GM12878 (cell line): ENCODE measurements at regions of chr2 and their contacts with region 1.

Region 1: GRCh38 chr2:225002039-225002655 is 40.1 kb downstream of the DOCK10 start:
- DNase-seq: peak; percentile 60
- ATAC-seq: peak; percentile 85
- H3K4me3 ChIP-seq: no peak overlapping the region
- H3K27ac ChIP-seq: no peak overlapping the region
- H3K4me1 ChIP-seq: peaks cover 13% of the 10 kb centered on the region; the same call in 1 of the 2 replicates
- H3K27me3 ChIP-seq: no peaks in the 10 kb centered on the region
- CTCF ChIP-seq: peak; percentile 76 to 83 (median 77)
- EP300 ChIP-seq: no peak
- POLR2A ChIP-seq: no peak
- RAD21 ChIP-seq: peak; percentile 95

Region 2: GRCh38 chr2:224357098-224357901 is 644.8 kb before region 1 on chr2:
- CTCF ChIA-PET with region 1: no interaction called
- POLR2A ChIA-PET with region 1: no interaction called
- RAD21 ChIA-PET with region 1: no interaction called
- SMC1A ChIA-PET with region 1: no interaction called
- in situ Hi-C with region 1: loop called (anchors 25 kb)
- intact Hi-C with region 1: loop called (anchors 5 kb)
- DNase-seq: peak; percentile 11
- ATAC-seq: peak; percentile 93
- H3K4me3 ChIP-seq: no peak overlapping the region
- H3K27ac ChIP-seq: no peak overlapping the region
- H3K4me1 ChIP-seq: no peaks in the 10 kb centered on the region
- H3K27me3 ChIP-seq: no peaks in the 10 kb centered on the region; a peak in 2 of 4 replicates
- CTCF ChIP-seq: peak; percentile 63 to 88 (median 68); a peak in 5 of 6 replicates
- EP300 ChIP-seq: no peak
- POLR2A ChIP-seq: no peak
- RAD21 ChIP-seq: peak; percentile 90

Region 3: GRCh38 chr2:224885836-224886547 is 116.2 kb before region 1 on chr2:
- CTCF ChIA-PET with region 1: interaction called, 30 read pairs
- POLR2A ChIA-PET with region 1: no interaction called
- RAD21 ChIA-PET with region 1: interaction called, 7 read pairs
- SMC1A ChIA-PET with region 1: interaction called, 24 read pairs
- in situ Hi-C with region 1: no loop called
- intact Hi-C with region 1: loop called (anchors 2 kb)
- DNase-seq: peak; percentile 37
- ATAC-seq: peak; percentile 94
- H3K4me3 ChIP-seq: no peak overlapping the region
- H3K27ac ChIP-seq: peak overlapping the region; percentile 59
- H3K4me1 ChIP-seq: peaks cover 6% of the 10 kb centered on the region; the same call in 1 of the 2 replicates
- H3K27me3 ChIP-seq: no peaks in the 10 kb centered on the region
- CTCF ChIP-seq: no peak
- EP300 ChIP-seq: 0 out of 4 replicates have a peak, but pooled peaks of 1 of the 2 experiments have one; percentile 27
- POLR2A ChIP-seq: no peak
- RAD21 ChIP-seq: peak; percentile 30

Region 4: DNA sequence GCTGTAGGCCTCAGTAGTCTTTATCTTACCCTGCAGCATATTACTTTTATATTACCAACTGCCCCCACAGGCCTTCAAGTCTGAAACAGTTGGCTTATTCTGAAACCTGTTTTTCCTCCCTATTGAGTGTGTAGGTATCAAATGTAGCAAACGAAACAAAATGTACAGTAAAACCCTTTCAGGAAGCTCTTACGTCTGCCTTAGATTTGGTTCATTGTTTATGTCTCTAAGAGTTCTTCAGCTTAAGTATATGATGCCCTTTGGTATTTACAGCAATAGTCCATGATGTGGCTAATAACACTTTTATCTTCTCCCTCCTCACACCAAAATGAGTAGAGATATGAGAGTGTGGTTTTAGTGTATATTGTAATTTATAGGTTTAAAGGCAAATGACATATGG is 68.7 kb before region 1 on chr2:
- CTCF ChIA-PET with region 1: interaction called, 118 read pairs
- POLR2A ChIA-PET with region 1: interaction called, 3 read pairs
- RAD21 ChIA-PET with region 1: interaction called, 13 read pairs
- SMC1A ChIA-PET with region 1: interaction called, 27 read pairs
- in situ Hi-C with region 1: loop called (anchors 5 kb)
- intact Hi-C with region 1: loop called (anchors 1 kb)
- DNase-seq: no peak
- ATAC-seq: peak; percentile 35
- H3K4me3 ChIP-seq: no peak overlapping the region
- H3K27ac ChIP-seq: no peak overlapping the region
- H3K4me1 ChIP-seq: peaks cover 29% of the 10 kb centered on the region
- H3K27me3 ChIP-seq: no peaks in the 10 kb centered on the region
- CTCF ChIP-seq: no peak
- EP300 ChIP-seq: no peak
- POLR2A ChIP-seq: no peak
- RAD21 ChIP-seq: no peak

Region 5: DNA sequence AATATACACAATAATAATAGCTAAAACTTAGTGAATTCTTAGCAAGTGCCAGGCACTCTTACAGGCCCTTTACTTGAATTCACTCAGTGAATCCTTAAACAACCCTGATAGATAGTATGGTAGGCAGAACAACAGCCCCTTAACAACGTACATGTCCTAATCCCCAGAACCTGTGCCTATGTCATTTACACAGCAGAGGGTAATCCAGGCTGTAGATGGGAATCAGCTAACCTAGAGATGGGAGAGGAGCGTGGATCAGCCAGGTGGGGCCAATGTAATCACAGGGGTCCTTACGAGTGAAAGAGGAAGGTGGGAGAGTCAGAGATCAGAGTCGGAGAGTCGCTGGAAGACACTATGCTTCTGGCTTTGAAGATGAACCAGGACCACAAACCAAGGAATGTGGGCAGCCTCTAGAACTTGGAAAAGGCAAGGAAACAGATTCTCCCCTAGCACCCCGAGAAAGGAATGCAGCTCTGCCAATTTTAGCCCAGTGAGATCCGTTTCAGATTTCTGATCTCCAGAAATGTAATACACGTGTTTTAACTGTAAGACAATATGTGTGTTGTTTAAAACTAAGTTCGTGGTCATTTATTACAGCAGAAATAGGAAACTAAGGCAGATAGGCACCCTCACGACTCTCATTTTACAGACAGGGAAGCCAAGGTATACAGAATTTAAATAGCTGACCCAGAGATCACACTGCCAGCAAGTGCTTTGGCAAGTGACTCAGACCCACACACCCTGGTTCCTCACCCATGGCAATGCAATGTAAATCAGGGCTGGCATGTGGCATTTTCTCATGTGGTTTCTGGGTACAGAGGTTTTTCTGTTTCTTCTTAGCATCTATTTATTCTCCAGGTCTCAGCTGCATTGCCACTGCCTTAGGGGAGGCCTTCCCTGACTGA is 28.8 kb before region 1 on chr2:
- CTCF ChIA-PET with region 1: interaction called, 16 read pairs
- POLR2A ChIA-PET with region 1: no interaction called
- RAD21 ChIA-PET with region 1: no interaction called
- SMC1A ChIA-PET with region 1: interaction called, 4 read pairs
- in situ Hi-C with region 1: no loop called
- intact Hi-C with region 1: no loop called
- DNase-seq: no peak
- ATAC-seq: peak; percentile 59
- H3K4me3 ChIP-seq: no peak overlapping the region
- H3K27ac ChIP-seq: no peak overlapping the region
- H3K4me1 ChIP-seq: peaks cover 32% of the 10 kb centered on the region
- H3K27me3 ChIP-seq: no peaks in the 10 kb centered on the region
- CTCF ChIP-seq: no peak
- EP300 ChIP-seq: no peak
- POLR2A ChIP-seq: no peak
- RAD21 ChIP-seq: no peak

Region 6: DNA sequence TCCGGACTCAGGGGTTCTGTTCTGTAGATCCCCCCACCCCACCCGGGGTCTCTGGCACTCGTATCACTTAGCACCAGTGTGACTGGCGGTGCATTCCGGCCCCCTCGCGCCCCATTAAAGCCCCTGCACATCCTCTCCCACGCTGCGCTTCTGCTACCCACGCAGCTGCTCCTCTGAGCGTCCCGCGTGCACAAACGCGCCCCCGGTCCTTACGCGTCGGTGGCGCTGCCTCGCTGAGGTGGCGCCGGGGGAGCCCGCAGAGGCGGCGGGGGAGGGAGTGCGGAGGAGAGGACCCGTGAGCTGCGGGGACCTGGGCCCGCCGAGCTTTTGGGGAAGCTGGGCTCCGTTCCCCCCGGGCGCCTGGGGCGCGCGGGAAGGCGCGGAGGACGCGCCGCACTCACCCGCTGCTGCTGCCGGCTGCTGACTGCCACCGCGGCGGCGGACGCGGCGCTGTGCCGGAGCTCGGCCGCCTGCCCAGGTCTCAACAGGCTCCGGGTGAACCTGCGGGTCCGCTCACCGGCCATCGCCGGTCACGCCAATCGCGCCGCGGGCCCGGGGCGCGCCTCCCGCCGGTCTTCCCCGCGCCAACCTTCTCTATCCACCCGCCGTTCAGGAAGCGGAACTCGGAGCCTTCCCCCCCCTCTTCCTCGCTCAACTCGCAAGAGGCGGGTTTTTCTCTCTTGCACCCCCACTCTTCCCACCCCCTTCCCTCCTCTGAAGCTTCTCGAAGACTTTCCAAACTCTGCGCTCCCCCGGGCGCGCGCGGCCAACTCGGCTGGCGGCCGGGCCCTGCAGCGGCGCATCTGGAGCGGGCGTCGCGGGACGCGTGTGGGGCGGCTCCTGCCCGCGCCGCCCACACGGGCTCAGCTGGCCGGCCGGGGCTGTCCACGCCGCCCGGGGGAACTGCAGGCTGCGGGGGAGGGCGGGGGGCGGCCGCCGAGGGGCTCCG is 40.0 kb after region 1 on chr2 and contains the start of gene DOCK10:
- CTCF ChIA-PET with region 1: interaction called, 15 read pairs
- POLR2A ChIA-PET with region 1: interaction called, 8 read pairs
- RAD21 ChIA-PET with region 1: interaction called, 47 read pairs
- SMC1A ChIA-PET with region 1: interaction called, 45 read pairs
- in situ Hi-C with region 1: no loop called
- intact Hi-C with region 1: no loop called
- DNase-seq: no peak
- ATAC-seq: peak; percentile 36
- H3K4me3 ChIP-seq: peak within 1 kb of the TSS; percentile 92
- H3K27ac ChIP-seq: peak within 1 kb of the TSS; percentile 98
- H3K4me1 ChIP-seq: peaks cover 13% of the 10 kb centered on the region
- H3K27me3 ChIP-seq: no peaks in the 10 kb centered on the region
- CTCF ChIP-seq: no peak
- EP300 ChIP-seq: no peak
- POLR2A ChIP-seq: peak; percentile 65
- RAD21 ChIP-seq: no peak
- polyA plus RNA-seq, gene DOCK10: 16.9 to 17.8 TPM

Region 7: GRCh38 chr2:225290757-225291400 is 288.7 kb after region 1 on chr2:
- CTCF ChIA-PET with region 1: no interaction called
- POLR2A ChIA-PET with region 1: no interaction called
- RAD21 ChIA-PET with region 1: no interaction called
- SMC1A ChIA-PET with region 1: no interaction called
- in situ Hi-C with region 1: no loop called
- intact Hi-C with region 1: no loop called
- DNase-seq: no peak
- ATAC-seq: no peak
- H3K4me3 ChIP-seq: no peak overlapping the region
- H3K27ac ChIP-seq: no peak overlapping the region
- H3K4me1 ChIP-seq: no peaks in the 10 kb centered on the region
- H3K27me3 ChIP-seq: no peaks in the 10 kb centered on the region
- CTCF ChIP-seq: no peak
- EP300 ChIP-seq: no peak
- POLR2A ChIP-seq: no peak
- RAD21 ChIP-seq: no peak

Region 8: DNA sequence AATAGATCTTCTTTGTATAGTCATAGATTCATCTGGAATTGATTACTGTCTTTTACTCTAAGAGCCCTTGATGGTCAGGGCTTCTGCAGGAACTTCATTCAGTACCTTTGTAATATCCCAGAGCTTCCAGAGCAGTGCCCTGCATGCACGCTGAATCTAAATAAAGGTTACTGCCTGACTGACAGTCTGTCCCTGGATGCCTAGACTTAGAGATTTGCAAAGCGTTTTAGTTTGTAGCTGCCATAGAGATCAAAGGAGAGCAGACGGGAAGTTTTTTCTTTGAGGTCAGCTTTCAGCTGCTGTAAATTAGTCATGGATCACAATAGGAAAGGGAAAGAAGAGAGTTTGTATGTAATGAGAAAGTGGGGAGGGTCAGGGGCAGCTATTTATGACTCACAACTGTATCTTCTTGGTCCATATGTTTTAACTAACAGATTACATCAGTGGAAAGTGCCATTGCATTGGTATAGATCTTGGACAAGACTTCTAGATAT is 352.2 kb after region 1 on chr2:
- CTCF ChIA-PET with region 1: no interaction called
- POLR2A ChIA-PET with region 1: no interaction called
- RAD21 ChIA-PET with region 1: no interaction called
- SMC1A ChIA-PET with region 1: no interaction called
- in situ Hi-C with region 1: no loop called
- intact Hi-C with region 1: no loop called
- DNase-seq: no peak
- ATAC-seq: no peak
- H3K4me3 ChIP-seq: no peak overlapping the region
- H3K27ac ChIP-seq: no peak overlapping the region
- H3K4me1 ChIP-seq: no peaks in the 10 kb centered on the region
- H3K27me3 ChIP-seq: no peaks in the 10 kb centered on the region; a peak in 1 of 4 replicates
- CTCF ChIP-seq: no peak
- EP300 ChIP-seq: no peak
- POLR2A ChIP-seq: no peak
- RAD21 ChIP-seq: no peak

Region 9: DNA sequence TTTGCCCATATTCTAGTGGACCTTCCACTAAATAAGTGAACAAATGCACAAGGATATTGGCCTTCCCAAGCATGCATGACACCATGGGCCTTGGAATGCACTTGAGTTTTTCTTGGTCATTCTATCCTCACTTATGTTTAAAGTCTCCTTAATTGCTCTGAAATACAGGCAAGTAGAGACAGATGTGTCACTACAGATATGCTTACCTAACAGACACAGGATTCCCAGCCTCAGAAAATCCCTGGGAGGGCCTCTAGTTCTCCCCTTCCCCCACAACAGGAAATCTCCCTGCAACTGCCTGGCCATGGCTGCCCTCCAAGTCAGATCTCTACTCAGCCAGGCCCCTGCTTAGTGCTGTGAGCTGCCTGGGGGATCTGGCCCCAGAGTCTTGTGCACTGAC is 1352.3 kb after region 1 on chr2:
- CTCF ChIA-PET with region 1: no interaction called
- POLR2A ChIA-PET with region 1: no interaction called
- RAD21 ChIA-PET with region 1: no interaction called
- SMC1A ChIA-PET with region 1: no interaction called
- in situ Hi-C with region 1: no loop called
- intact Hi-C with region 1: no loop called
- DNase-seq: no peak
- ATAC-seq: no peak
- H3K4me3 ChIP-seq: no peak overlapping the region
- H3K27ac ChIP-seq: no peak overlapping the region
- H3K4me1 ChIP-seq: no peaks in the 10 kb centered on the region
- H3K27me3 ChIP-seq: no peaks in the 10 kb centered on the region; a peak in 1 of 4 replicates
- CTCF ChIP-seq: no peak
- EP300 ChIP-seq: no peak
- POLR2A ChIP-seq: no peak
- RAD21 ChIP-seq: no peak